AG04450 (cell line): ENCODE measurements at regions of chr1 and their contacts with region 1.

Region 1: GRCh38 chr1:160046494-160047110 is 14.8 kb upstream of the PIGM start:
- DNase-seq: no peak
- H3K4me3 ChIP-seq: no peak overlapping the region
- H3K27ac ChIP-seq: no peak overlapping the region
- H3K27me3 ChIP-seq: peaks cover 36% of the 10 kb centered on the region
- CTCF ChIP-seq: peak; percentile 63

Region 2: DNA sequence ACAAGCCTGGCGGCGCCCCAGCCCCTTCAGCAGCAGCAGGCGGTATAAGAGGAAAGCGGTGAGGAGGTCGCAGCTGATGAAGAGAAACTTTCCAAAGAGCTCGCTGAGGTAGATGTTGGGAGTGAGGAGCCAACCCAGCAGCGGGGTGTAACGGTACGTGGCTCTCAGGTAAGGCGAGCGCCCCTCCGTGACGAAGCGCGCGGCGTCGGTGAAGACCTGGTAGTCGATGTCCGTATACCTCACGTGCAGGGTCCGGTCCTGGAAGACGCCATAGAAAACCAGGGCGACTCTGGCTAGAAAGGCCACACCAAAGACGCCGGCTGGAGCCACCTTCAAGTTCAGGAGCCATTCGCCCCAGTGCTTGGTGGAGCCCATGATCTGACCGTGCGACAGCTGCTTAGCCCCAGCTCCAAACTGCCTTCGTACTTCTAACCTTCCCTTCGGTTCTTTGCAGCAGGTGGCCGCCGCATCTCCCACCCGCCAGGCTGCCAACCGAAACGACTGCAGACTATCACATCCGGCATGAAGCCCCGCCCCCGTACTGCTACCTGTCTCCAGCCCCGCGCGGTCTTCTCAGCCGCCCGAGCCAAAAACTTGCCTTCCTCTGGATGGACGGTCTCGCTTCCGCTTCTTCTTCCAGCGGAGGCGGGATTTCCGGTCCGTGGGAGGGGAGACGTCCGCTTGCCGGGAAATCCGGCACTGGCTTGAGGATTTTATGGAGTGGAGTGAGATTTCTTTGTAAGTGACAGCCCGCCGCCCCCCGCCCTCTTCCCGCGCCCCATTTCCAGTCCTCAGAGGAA is 15.0 kb before region 1 on chr1 and contains the start of gene PIGM:
- CTCF ChIA-PET with region 1: interaction called, 27 read pairs
- POLR2A ChIA-PET with region 1: no interaction called
- DNase-seq: peak; percentile 60
- H3K4me3 ChIP-seq: peak within 1 kb of the TSS; percentile 94
- H3K27ac ChIP-seq: no peak within 1 kb of the TSS
- H3K27me3 ChIP-seq: peaks cover 5% of the 10 kb centered on the region
- CTCF ChIP-seq: no peak
- polyA plus RNA-seq, gene PIGM: 5.1 and 6.6 TPM in 2 replicates

Region 3: DNA sequence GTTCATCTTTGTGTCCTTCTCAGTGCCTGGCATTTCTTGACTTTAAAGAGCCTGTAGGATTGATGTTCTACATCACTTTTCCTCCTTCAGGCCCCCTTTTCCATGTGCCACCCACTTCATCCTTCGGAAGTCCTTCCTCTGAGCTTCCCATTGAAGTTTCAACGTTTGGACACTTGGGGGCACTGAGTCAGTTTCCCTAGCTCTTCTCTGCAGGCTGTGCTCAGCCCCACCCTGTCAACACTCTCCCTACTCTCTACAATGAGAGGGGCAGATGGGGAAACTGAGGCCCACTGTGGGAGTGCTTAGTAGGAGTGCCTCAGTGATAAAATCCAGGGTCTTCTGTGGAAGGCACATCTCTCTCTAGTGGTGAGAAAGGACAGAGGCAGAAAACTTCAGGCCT is 11.5 kb after region 1 on chr1:
- CTCF ChIA-PET with region 1: interaction called, 16 read pairs
- POLR2A ChIA-PET with region 1: no interaction called
- DNase-seq: no peak
- H3K4me3 ChIP-seq: no peak overlapping the region
- H3K27ac ChIP-seq: no peak overlapping the region
- H3K27me3 ChIP-seq: peaks cover 50% of the 10 kb centered on the region
- CTCF ChIP-seq: 0 out of 2 replicates have a peak, but pooled peaks have one; percentile 7

Region 4: DNA sequence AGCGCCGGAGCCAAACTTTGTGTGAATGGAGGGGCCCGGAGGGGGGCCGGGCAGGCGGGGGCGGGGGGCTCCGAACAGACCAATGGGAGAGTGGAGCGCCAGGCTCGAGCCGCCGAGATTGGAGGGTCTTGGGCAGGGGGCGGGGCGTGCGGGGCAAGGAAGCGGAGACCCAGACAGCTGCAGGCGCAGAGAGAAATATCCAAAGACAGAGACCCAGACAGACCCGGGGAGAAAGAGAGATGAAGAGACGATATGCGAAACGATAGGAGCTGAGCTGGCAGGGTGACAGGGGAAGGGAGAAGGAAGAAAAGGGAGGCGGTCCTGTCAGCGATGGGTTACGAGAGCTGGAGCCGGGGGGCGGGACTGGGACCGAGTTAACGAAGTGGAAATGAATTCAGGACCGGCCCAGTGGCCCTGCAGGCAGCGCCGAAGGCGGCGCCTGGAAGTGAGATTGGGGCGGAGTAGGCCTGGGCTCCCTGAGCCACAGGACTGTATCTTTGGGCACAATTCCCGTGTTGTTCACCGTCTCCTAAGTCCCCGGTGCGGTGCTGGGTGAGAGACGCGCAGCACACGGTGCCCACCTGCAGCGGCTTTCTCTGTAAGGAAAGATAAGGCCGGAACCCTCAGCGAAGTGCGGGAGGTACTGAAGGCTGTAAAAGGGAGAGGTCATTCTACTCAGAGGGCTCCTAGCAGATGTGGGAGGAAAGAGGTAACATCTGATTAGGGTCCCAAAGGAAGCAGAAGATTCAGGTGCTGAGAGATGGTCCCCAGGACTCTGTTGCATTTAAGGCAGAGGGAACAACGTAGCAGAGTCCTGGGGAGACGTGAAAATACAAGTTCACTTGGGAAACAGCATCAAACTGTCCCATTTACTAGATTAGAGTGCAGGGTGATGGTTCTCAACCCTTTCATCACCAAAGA is 23.9 kb after region 1 on chr1:
- CTCF ChIA-PET with region 1: interaction called, 10 read pairs
- POLR2A ChIA-PET with region 1: interaction called, 3 read pairs
- DNase-seq: no peak
- H3K4me3 ChIP-seq: peak overlapping the region; percentile 62
- H3K27ac ChIP-seq: no peak overlapping the region
- H3K27me3 ChIP-seq: peaks cover 67% of the 10 kb centered on the region
- CTCF ChIP-seq: no peak

Region 5: GRCh38 chr1:160078512-160079195 is 32.1 kb after region 1 on chr1:
- CTCF ChIA-PET with region 1: interaction called, 57 read pairs
- POLR2A ChIA-PET with region 1: no interaction called
- DNase-seq: no peak
- H3K4me3 ChIP-seq: no peak overlapping the region
- H3K27ac ChIP-seq: no peak overlapping the region
- H3K27me3 ChIP-seq: peaks cover 62% of the 10 kb centered on the region
- CTCF ChIP-seq: peak; percentile 65